Activated T-helper 2 cell treated with anti-CD3 and anti-CD28 coated beads, Interferon-gamma antibody, Interleukin-2, Interleukin-4, amounts not matched to agents 10 μg/mL and 5 μg/mL and 100 μg/mL, durations not matched to agents 14 hours and 24 hours and 36 hours (primary cell): ENCODE measurements at regions of chr20 and their contacts with region 1.

Region 1: GRCh38 chr20:16975682-16976081 is 227.5 kb downstream of the OTOR start:
- DNase-seq: no peak
- H3K4me3 Mint-ChIP-seq: no peak overlapping the region
- H3K27ac Mint-ChIP-seq: no peak overlapping the region
- H3K4me1 Mint-ChIP-seq: no peaks in the 10 kb centered on the region
- H3K27me3 Mint-ChIP-seq: no peaks in the 10 kb centered on the region

Region 2: DNA sequence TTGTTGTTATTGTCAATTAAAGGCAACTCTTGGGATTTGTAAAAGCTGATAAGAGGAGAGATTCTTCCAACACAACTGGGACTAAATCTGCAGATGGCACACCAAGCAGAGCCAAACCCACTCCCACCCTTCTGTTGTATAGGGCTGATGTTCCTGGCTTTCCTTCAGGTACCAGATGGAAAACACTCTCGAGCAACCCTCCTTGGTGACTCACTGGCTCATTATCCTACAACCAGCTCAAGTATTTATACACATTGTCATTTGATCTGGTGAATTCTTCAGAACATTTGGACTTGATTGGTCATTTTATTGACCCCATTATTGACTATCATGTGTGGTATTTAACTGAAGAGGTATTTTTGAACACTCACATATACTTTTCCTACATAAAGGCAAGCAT is 60.9 kb after region 1 on chr20:
- intact Hi-C with region 1: loop called (anchors 10 kb)
- DNase-seq: no peak
- H3K4me3 Mint-ChIP-seq: no peak overlapping the region
- H3K27ac Mint-ChIP-seq: no peak overlapping the region
- H3K4me1 Mint-ChIP-seq: no peaks in the 10 kb centered on the region
- H3K27me3 Mint-ChIP-seq: no peaks in the 10 kb centered on the region

Region 3: DNA sequence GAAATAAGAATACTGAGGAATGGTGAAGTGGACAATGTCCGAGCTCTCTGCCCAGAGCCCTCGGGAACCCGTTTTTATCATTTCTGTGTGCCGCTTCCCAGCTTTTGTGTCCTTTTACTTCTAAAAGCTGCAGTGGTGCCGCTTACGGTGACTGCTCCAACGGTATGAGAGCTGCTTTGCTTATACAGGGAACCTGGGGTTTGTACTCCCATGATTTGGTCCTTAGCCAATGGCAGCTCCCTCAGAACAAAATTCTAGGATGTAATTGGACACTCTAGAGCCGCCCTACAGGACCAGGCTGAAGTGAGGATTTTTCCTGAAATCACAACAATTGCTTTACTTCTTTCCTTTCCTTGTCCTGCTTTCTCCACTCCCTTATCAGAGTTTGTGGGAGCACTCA is 227.0 kb after region 1 on chr20:
- intact Hi-C with region 1: no loop called
- DNase-seq: no peak
- H3K4me3 Mint-ChIP-seq: no peak overlapping the region
- H3K27ac Mint-ChIP-seq: no peak overlapping the region
- H3K4me1 Mint-ChIP-seq: no peaks in the 10 kb centered on the region
- H3K27me3 Mint-ChIP-seq: peaks cover 1% of the 10 kb centered on the region

Region 4: DNA sequence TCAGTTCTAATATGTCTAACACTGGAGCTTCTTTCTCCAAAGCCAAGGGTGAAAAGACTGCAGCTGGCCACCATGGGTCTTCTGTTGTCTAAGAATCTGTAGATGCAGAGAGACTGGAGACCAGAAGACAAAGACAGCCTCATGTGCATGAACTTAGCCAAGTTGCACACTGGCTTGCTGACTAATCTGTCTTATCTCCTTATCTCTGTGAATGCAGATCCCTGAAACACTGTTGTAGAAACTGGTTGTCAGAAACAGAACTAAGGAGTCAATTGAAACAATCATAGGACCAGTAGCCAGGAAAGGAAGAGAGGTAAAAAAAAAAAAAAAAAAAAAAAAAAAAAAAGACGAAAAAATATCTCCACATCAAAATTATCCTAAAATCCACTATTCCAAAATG is 445.8 kb after region 1 on chr20:
- intact Hi-C with region 1: no loop called
- DNase-seq: no peak
- H3K4me3 Mint-ChIP-seq: no peak overlapping the region
- H3K27ac Mint-ChIP-seq: no peak overlapping the region
- H3K4me1 Mint-ChIP-seq: no peaks in the 10 kb centered on the region
- H3K27me3 Mint-ChIP-seq: peaks cover 2% of the 10 kb centered on the region